Activated CD4-positive, alpha-beta T cell treated with anti-CD3 and anti-CD28 coated beads, Interleukin-2, amount 10 ng/mL, durations not matched to agents 24 days and 14 days (primary cell): ENCODE measurements at regions of chr16 and their contacts with region 1.

Region 1: DNA sequence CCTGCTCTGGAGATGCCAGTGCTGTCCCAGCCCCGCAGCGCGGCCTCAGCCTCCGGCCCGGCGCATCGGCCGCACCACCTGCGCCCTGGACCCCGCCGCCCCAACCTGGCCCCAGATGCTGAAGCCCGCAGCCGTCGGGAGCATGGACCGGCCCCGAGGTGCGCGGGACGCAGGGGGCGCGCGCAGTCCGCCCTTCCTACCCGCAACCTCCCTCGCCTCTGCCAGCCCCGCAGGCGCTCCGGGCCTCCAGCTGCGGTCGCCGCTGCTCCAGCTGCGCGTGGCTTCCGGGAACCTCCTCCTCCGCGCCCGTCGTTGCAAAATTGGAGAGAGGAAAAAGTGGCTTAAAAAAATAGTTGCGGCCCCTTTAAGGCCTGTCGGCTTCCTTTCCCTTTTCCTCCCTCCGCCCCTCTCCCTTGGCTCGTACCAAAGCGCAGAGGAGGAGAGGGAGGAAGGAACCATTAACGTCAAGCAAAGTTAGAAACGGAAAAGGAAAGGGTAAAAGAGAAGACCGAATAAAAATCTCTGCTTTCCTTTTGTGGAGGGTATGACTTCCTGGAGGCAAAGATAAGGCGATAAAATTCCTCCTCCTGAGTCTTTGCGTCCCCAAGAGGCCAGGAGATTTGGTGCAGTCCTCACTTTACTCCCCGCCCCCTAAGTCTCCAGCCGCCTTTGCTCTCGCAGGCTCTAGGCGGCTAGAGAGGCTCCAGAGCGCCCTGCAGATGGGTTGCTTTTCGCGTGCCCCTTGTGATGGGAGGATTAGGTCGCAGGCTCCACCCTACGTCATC is at the start of gene CDIPT:
- DNase-seq: peak; percentile 98
- H3K4me3 Mint-ChIP-seq: peak within 1 kb of the TSS; percentile 96
- H3K27ac Mint-ChIP-seq: peak within 1 kb of the TSS; percentile 98
- H3K4me1 Mint-ChIP-seq: peaks cover 25% of the 10 kb centered on the region
- H3K27me3 Mint-ChIP-seq: no peaks in the 10 kb centered on the region
- total RNA-seq, gene CDIPT: 69.2 and 71.2 TPM in 2 replicates

Region 2: GRCh38 chr16:29805378-29806098 is 57.5 kb before region 1 on chr16:
- intact Hi-C with region 1: loop called (anchors 1 kb)
- DNase-seq: peak; percentile 99
- H3K4me3 Mint-ChIP-seq: peak overlapping the region; percentile 96
- H3K27ac Mint-ChIP-seq: peak overlapping the region; percentile 99
- H3K4me1 Mint-ChIP-seq: peaks cover 42% of the 10 kb centered on the region
- H3K27me3 Mint-ChIP-seq: no peaks in the 10 kb centered on the region

Region 3: DNA sequence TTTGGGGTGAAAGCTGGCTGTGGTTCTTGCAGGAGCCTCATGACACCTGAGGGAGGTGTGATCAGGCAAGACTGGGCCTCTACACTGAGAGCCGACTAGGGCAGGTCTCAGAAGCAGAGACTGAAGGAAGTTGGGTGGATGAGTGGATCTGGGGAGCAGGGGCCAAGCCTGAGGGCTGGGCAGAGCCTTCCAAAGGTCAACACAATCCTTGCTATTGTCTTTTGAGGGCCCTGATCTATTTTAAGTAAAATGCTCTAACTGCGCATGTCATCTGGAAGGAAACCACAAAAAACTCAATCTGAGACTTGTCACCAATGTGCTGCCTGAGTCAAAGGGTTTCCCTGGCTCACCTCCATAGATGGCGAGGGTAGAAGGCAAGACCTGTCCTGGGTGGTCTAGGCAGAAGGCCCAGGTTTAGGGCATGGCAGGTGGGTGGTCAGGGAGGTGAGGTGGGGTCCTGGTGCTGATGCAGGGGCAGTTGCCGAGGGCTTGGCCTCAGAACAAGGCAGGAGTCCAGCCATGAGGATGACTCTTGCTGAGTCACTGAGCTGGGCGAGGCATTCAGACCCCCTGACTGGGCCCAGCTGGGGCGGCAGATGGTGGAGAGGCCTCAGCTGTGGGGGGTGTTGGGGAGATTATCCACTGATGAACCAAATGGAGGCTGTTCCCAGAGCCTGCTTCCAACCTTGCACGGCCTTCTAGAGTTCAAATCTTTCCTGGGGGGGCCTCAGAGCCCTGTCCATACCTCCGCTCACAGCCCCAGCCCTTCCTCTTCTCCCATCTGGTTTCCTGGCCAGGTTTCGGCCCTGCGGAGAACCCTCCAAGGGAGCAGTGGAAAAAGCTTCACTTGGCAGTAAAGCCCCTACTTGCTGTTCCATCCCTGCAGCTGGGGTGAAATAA is 37.7 kb before region 1 on chr16:
- intact Hi-C with region 1: loop called (anchors 1 kb)
- DNase-seq: peak; percentile 85
- H3K4me3 Mint-ChIP-seq: peak overlapping the region; percentile 69
- H3K27ac Mint-ChIP-seq: peak overlapping the region; percentile 85
- H3K4me1 Mint-ChIP-seq: peaks cover 50% of the 10 kb centered on the region
- H3K27me3 Mint-ChIP-seq: no peaks in the 10 kb centered on the region

Region 4: DNA sequence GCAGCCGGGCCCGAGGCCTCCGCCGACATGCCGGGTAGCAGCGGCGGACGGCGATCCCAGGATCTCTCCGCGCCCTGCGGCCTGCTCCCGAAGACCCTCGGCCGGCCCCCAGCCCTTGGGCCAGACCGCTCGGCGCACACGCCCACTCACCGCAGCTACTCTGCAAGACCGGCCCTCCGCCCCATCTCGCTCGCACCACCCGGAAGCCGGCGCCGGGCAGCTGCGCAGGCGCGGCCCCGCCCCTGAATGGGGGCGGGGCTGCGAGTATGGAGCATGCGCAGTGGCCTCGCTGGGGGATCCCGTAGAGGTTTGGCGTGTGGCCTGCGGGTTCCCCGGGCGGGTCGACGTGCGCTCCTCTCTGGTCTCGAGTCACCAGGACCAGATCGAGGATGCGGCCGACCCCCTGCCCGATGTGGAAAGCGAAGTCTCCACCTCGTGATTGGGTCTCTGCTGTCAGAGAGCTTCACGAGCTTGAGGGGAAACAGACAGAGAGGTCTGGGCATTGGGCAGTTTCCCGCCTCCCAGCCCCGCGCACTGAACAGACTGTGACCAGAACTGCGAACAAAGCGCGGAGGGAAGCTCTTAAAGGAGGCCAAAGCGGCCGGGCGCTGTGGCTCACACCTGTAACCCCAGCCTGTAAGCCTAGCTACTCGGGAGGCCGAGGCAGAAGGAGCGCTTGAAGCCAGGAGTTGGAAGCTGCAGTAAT is 63.1 kb after region 1 on chr16 and contains the start of gene KCTD13:
- intact Hi-C with region 1: loop called (anchors 1 kb)
- DNase-seq: peak; percentile 99
- H3K4me3 Mint-ChIP-seq: peak within 1 kb of the TSS; percentile 91
- H3K27ac Mint-ChIP-seq: peak within 1 kb of the TSS; percentile 95
- H3K4me1 Mint-ChIP-seq: peaks cover 33% of the 10 kb centered on the region
- H3K27me3 Mint-ChIP-seq: no peaks in the 10 kb centered on the region
- total RNA-seq, gene KCTD13: 51.4 and 58.8 TPM in 2 replicates

Region 5: DNA sequence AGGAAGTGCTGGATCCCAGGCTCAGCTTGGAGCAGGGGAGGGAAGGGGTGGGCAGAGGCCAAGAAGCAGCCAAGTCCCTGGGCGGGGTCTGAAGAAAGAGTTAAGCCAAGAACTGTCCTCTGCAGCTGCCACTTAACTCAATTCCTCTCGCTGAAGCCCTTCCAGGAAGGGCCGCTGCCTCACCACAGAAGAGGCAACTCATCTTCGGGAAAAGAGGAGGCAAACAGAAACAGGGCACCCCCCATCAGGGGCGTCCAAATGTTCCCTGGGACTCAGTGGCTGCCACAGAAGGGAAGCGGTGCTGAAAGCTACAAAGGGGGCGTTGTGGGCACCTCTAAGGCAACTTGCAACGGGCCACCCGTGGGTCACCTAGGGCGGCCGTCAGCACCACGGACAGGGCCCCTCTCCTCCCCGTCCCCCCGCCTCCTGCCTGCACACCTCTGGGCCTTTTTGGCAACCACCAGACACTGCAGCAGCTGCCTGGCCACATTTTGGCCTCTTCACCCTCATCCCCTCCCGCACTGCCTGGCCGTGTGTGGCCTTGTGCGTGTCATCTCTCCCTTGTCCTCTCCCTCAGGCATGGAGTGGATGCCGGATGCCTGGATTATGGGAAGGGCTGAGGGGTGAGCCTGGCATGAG is 165.5 kb after region 1 on chr16:
- intact Hi-C with region 1: loop called (anchors 10 kb)
- DNase-seq: peak; percentile 80
- H3K4me3 Mint-ChIP-seq: no peak overlapping the region
- H3K27ac Mint-ChIP-seq: no peak overlapping the region
- H3K4me1 Mint-ChIP-seq: peaks cover 6% of the 10 kb centered on the region
- H3K27me3 Mint-ChIP-seq: peaks cover 49% of the 10 kb centered on the region